Activated CD4-positive, alpha-beta memory T cell treated with anti-CD3 and anti-CD28 coated beads for 36 hours (primary cell): ENCODE measurements at regions of chr2 and their contacts with region 1.

Region 1: DNA sequence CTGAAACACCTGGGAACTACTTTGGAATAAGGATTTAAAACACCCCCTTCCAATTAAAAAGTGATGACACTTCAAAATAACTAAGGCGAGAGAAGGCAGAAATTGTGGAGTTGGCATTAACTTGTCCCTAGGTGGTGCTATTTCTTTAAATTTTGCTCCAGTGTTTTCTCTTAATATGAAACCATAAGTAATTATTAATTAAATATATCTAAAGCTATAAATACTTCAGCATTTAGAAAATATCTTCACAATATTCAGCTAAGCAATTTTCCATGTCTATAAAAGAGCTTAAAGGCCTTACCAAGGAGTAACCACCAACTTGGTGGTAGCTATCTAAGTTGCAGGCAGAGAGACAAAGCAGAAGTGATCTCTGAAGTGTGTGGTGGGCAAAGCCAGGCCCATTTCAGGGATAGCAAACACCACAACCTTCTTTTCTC is 186.8 kb upstream of the PGAP1 start:
- DNase-seq: no peak
- H3K4me3 Mint-ChIP-seq: no peak overlapping the region
- H3K27ac Mint-ChIP-seq: peak overlapping the region; percentile 76
- H3K4me1 Mint-ChIP-seq: peaks cover 20% of the 10 kb centered on the region
- H3K27me3 Mint-ChIP-seq: no peaks in the 10 kb centered on the region

Region 2: DNA sequence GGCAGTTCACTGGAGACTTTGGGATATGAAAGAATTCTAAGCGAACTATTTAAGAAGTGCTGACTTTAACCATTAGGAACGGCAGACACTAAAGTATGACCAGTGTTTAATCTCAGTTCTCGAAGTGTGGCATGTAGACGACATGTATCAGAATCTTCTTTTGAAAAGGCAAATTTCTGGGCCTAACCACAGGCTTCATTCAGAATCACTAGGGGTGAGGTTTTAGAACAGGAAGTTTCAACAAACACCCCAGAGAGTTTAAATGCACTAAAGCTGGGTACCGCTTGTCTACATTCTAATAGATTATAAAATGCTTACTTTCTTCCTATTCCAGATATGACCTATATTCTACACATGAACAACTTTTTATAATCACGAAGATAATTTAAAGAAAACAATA is 17.0 kb after region 1 on chr2:
- CTCF ChIA-PET with region 1: interaction called, 27 read pairs
- POLR2A ChIA-PET with region 1: no interaction called
- intact Hi-C with region 1: no loop called
- DNase-seq: no peak
- H3K4me3 Mint-ChIP-seq: no peak overlapping the region
- H3K27ac Mint-ChIP-seq: peak overlapping the region; percentile 14
- H3K4me1 Mint-ChIP-seq: peaks cover 79% of the 10 kb centered on the region
- H3K27me3 Mint-ChIP-seq: no peaks in the 10 kb centered on the region

Region 3: DNA sequence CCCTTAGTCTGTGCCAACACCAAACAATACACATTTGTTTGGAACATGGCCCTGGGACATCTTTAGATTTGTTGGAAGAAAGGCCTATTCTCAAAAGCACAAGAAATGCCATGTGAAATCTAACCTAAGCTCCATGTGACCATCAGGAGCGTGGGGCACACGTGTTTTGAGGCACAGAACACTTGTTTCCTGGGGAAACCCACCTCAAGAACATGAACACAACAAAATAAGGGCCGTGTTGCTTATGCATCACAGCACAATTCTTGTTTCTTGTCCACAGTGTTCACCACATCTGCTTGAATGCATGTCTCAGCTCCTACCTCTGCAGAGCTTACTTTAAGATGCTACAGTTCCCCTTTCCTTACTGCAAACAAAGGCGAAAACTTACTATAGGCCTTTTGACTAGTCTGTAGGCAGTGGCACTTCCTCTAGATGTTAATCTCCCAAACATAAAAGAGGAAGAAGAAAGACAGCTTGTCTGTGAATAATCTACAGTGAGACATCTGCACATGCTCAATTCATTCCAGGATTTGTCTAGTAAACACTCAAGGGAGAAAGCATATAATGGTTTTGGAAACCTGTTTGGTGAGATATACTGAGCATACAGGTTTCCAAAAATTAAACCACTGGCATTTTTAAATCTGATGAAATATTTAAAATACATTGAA is 32.3 kb after region 1 on chr2:
- CTCF ChIA-PET with region 1: interaction called, 15 read pairs
- POLR2A ChIA-PET with region 1: no interaction called
- intact Hi-C with region 1: no loop called
- DNase-seq: no peak
- H3K4me3 Mint-ChIP-seq: no peak overlapping the region
- H3K27ac Mint-ChIP-seq: peak overlapping the region; percentile 87
- H3K4me1 Mint-ChIP-seq: peaks cover 64% of the 10 kb centered on the region
- H3K27me3 Mint-ChIP-seq: no peaks in the 10 kb centered on the region

Region 4: DNA sequence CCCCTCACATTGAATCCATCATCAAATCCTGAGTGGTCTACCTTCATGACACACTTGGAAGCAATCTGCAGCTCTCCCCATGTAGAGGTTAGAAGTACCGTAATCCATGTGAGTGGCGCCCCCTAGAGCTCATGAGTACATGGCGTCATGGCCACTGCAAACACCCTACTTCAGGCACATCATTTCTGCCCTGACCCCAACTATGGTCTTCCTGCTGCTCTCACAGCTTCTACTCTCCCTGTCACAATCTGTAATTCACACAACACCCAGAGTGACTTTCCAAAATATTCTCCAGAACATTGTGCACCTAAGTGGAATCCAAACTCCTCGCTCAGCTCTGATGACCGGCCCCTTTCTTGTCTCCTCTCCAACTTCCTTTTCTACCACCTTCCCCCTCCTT is 55.4 kb after region 1 on chr2:
- CTCF ChIA-PET with region 1: interaction called, 134 read pairs
- POLR2A ChIA-PET with region 1: interaction called, 5 read pairs
- intact Hi-C with region 1: loop called (anchors 1 kb)
- DNase-seq: peak; percentile 84
- H3K4me3 Mint-ChIP-seq: no peak overlapping the region
- H3K27ac Mint-ChIP-seq: peak overlapping the region; percentile 73
- H3K4me1 Mint-ChIP-seq: peaks cover 72% of the 10 kb centered on the region
- H3K27me3 Mint-ChIP-seq: no peaks in the 10 kb centered on the region

Region 5: GRCh38 chr2:197356136-197356535 is 242.8 kb after region 1 on chr2:
- CTCF ChIA-PET with region 1: interaction called, 5 read pairs
- POLR2A ChIA-PET with region 1: no interaction called
- intact Hi-C with region 1: loop called (anchors 5 kb)
- DNase-seq: no peak
- H3K4me3 Mint-ChIP-seq: no peak overlapping the region
- H3K27ac Mint-ChIP-seq: no peak overlapping the region
- H3K4me1 Mint-ChIP-seq: peaks cover 39% of the 10 kb centered on the region
- H3K27me3 Mint-ChIP-seq: no peaks in the 10 kb centered on the region

Region 6: GRCh38 chr2:197383823-197384222 is 270.5 kb after region 1 on chr2:
- CTCF ChIA-PET with region 1: interaction called, 42 read pairs
- POLR2A ChIA-PET with region 1: no interaction called
- intact Hi-C with region 1: no loop called
- DNase-seq: no peak
- H3K4me3 Mint-ChIP-seq: no peak overlapping the region
- H3K27ac Mint-ChIP-seq: no peak overlapping the region
- H3K4me1 Mint-ChIP-seq: peaks cover 15% of the 10 kb centered on the region
- H3K27me3 Mint-ChIP-seq: no peaks in the 10 kb centered on the region

Region 7: GRCh38 chr2:197480165-197481036 is 367.1 kb after region 1 on chr2:
- CTCF ChIA-PET with region 1: no interaction called
- POLR2A ChIA-PET with region 1: no interaction called
- intact Hi-C with region 1: no loop called
- DNase-seq: no peak
- H3K4me3 Mint-ChIP-seq: no peak overlapping the region
- H3K27ac Mint-ChIP-seq: peak overlapping the region; percentile 46
- H3K4me1 Mint-ChIP-seq: peaks cover 9% of the 10 kb centered on the region
- H3K27me3 Mint-ChIP-seq: no peaks in the 10 kb centered on the region